ENCODE measurements at regions of chr5 and their contacts with region 1.

Region 1: GRCh38 chr5:138605254-138605972 is 30.2 kb upstream of the HSPA9 start:
- DNase-seq: no peak
- H3K4me3 ChIP-seq: no peak overlapping the region
- H3K27ac ChIP-seq: no peak overlapping the region
- H3K4me1 ChIP-seq: peaks cover 27% of the 10 kb centered on the region
- H3K27me3 ChIP-seq: no peaks in the 10 kb centered on the region
- CTCF ChIP-seq: no peak

Region 2: DNA sequence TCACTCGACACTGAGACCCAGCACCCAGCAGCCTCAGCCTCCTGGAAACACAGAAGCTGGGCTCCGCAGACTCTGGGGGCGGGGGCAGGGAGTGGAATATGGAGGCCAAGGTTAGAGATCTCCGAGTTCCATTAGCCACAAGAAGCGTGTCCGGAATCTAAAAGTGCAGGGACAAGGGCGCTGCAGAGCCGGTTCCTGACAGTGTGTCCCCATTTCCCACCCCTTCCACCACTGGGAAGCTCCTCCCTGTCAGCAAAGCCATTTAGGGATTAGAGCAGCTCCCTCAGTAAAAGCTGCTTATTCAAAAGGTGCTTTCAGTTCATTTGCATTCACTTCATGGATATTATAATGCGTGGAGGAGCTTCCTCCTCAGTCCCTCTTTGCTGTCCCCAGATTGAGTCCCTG is 43.9 kb after region 1 on chr5:
- CTCF ChIA-PET with region 1: no interaction called
- dilution Hi-C with region 1: loop called (anchors 5 kb)
- in situ Hi-C with region 1: no loop called
- intact Hi-C with region 1: no loop called
- DNase-seq: no peak
- H3K4me3 ChIP-seq: no peak overlapping the region
- H3K27ac ChIP-seq: no peak overlapping the region
- H3K4me1 ChIP-seq: peaks cover 8% of the 10 kb centered on the region
- H3K27me3 ChIP-seq: no peaks in the 10 kb centered on the region
- CTCF ChIP-seq: no peak

Region 3: DNA sequence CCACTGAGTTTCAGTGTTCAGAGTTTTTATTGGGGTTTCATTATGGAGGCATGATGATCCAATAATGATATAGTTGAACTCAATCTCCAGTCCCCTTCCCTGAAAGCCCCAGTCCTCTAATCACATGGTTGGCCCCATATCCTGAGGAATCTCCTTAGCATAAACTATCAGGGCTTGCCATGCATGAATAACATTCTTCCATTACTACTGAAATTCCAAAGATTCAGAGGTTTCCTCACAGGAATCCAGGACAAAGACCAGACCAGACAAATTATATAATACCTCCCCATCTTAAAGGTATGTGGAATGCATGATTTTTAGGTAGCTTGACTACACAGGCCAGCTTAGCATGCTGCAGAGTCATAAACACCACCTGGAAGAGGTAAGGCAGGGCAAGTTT is 285.2 kb after region 1 on chr5:
- CTCF ChIA-PET with region 1: no interaction called
- dilution Hi-C with region 1: no loop called
- in situ Hi-C with region 1: no loop called
- intact Hi-C with region 1: no loop called
- DNase-seq: no peak
- H3K4me3 ChIP-seq: no peak overlapping the region
- H3K27ac ChIP-seq: no peak overlapping the region
- H3K4me1 ChIP-seq: no peaks in the 10 kb centered on the region
- H3K27me3 ChIP-seq: no peaks in the 10 kb centered on the region
- CTCF ChIP-seq: no peak